ENCODE measurements at regions of chr1 and their contacts with region 1.

Region 1: DNA sequence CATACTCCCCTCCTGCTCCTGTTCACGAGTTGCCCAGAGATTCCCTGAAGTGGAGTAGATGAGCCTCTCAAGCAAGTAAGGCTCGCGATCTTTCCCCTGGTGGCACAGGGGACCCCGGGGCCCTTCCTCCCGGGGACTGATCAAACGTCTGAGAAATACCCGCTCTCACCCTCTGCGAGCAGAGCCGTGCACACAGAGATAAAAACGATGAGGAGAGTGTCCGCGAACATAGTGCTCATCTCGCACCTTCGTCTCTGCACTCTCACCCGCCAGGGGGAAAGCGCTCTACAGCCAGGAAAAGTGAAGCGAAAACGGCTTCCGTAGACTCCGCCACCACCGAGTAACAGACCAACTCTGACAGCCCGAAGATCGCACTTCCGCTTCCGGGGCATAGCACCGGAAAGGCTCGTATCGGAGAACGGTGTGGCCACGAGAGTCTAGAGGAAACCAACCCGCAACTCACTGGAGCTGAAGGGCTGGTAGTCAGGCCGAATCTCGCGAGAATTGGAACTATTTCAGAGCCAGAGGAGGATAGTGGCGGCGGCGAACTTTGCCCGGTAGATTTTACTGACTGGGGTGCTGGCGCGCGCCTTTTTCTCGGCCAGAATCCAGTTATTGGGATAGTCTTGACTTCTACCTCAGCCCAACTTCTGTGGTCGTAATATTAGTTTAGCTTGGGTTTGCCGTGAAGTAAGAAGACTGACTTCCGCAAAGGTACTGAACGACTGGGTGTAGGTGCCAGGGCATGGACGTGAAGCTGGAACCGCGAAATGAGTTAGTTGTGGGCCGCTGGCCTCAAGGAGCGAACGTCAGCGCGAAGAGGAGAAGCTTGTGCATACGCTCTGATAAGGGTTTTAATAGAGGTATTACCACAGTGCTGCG is at the start of gene TMCO1:
- DNase-seq: peak; percentile 99
- ATAC-seq: peak; percentile 91
- H3K4me3 ChIP-seq: peak within 1 kb of the TSS; percentile 80
- H3K27ac ChIP-seq: peak within 1 kb of the TSS; percentile 95
- H3K4me1 ChIP-seq: peaks cover 7% of the 10 kb centered on the region
- H3K27me3 ChIP-seq: no peaks in the 10 kb centered on the region
- CTCF ChIP-seq: peak; percentile 22
- POLR2A ChIP-seq: peak; percentile 91
- RAD21 ChIP-seq: peak; percentile 44
- total RNA-seq, gene TMCO1: 86.4 and 121 TPM in 2 replicates

Region 2: DNA sequence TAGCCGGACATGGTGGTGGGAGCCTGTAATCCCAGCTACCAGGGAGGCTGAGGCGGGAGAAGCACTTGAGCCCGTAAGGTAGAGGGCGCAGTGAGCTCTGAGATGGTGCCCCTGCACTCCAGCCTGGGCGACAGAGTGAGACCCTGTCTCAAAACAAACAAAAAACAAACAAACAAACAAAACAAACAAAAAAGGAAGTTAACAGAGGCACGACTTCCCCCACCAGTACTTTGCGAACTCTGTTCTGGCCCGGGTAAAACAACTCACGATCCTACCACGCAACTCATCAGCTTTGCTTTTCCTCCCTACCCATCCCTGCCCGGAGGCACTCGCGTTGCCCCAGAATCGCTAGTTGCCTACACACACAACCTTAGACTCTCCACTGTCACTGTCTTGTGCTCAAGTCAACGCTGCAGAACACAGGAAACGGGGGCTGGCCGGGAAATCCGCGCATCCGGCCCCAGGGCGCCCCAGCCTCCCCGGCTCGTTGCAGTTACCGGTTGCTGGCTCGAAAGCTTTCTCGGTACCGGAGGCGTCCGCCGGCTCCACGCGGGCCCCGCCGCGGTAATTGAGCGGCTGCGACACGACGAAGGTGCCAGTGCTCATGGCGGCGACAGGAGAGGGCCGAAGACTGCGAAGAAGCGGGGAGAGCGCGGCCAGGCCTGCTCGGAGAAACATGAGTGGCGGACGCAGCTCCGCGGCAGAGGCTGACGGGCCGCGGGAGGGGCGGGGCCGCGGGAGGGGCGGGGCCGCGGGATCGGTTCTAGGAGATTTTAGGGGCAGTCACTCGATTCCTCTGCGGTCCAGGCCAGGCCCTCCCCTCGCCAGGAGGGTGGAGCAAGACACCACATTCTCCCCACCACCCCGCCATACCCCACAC is 70.6 kb before region 1 on chr1 and contains the start of gene ALDH9A1:
- CTCF ChIA-PET with region 1: no interaction called
- POLR2A ChIA-PET with region 1: no interaction called
- dilution Hi-C with region 1: no loop called
- in situ Hi-C with region 1: no loop called
- intact Hi-C with region 1: loop called (anchors 1 kb)
- DNase-seq: peak; percentile 76
- ATAC-seq: peak; percentile 96
- H3K4me3 ChIP-seq: peak within 1 kb of the TSS; percentile 70
- H3K27ac ChIP-seq: peak within 1 kb of the TSS; percentile 94
- H3K4me1 ChIP-seq: no peaks in the 10 kb centered on the region
- H3K27me3 ChIP-seq: no peaks in the 10 kb centered on the region
- CTCF ChIP-seq: peak; percentile 23; the same call in 1 of the 2 replicates
- POLR2A ChIP-seq: peak; percentile 61; the same call in 1 of the 2 replicates
- RAD21 ChIP-seq: no peak
- total RNA-seq, gene ALDH9A1: 43.7 and 101 TPM in 2 replicates

Region 3: DNA sequence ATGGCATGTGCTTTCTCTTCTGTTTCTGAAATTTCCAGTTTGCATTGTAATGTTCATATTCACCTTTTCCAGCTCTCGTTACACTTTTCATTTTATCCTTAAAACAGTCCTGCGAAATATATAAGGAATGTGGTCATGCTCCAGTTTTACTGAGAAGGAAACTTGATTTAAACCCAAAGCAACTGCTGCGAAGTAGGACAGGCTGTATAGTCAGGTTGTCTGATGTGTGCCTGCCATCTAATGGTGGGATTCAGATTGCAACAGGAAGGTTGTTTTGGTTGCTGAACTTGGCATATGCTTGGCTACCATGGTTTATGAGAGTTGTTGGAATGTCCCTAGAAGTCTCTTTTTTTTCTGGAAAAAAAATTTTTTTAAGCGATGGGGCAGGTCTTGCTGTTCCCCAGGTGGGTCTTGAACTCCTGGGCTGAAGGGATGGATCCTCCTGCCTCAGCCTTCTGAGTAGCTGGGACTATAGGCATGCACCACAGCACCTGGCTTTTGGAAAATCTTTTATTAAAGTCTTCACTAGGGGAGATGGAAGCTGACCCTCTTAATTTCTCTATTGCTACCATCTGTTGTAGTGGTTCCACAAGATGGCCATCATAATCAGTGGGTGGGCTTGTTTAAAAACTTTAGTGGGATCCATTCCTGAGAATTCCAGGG is 145.5 kb after region 1 on chr1:
- CTCF ChIA-PET with region 1: no interaction called
- POLR2A ChIA-PET with region 1: interaction called, 3 read pairs
- dilution Hi-C with region 1: no loop called
- in situ Hi-C with region 1: loop called (anchors 5 kb)
- intact Hi-C with region 1: loop called (anchors 1 kb)
- DNase-seq: peak; percentile 88
- ATAC-seq: peak; percentile 89
- H3K4me3 ChIP-seq: no peak overlapping the region
- H3K27ac ChIP-seq: no peak overlapping the region
- H3K4me1 ChIP-seq: peaks cover 5% of the 10 kb centered on the region
- H3K27me3 ChIP-seq: no peaks in the 10 kb centered on the region
- CTCF ChIP-seq: peak; percentile 96
- POLR2A ChIP-seq: peak; percentile 57
- RAD21 ChIP-seq: peak; percentile 100